Activated T-helper 2 cell treated with anti-CD3 and anti-CD28 coated beads, Interferon-gamma antibody, Interleukin-2, Interleukin-4, amounts not matched to agents 10 μg/mL and 5 μg/mL and 100 μg/mL, durations not matched to agents 14 hours and 24 hours and 36 hours (primary cell): ENCODE measurements at regions of chr6 and their contacts with region 1.

Region 1: DNA sequence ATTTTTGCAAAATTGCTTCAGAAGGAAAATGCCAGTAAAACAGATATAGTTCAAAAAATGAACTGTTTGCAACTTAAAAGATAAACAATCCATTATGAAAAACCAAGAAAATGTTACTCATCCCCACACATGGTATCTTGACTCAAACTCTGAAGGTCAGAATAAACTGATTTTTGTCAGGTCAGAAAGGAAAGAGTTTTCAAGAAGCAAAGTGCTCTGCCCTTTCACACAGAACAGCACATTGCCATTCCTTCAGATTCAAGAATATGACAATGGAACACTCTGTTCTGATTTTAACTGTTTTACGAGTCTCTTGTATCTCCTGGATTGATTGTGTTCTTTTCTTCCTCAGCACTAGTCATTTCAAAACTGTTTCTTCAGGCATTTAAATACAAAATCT is 33.8 kb upstream of the NT5E start:
- DNase-seq: no peak
- H3K4me3 Mint-ChIP-seq: no peak overlapping the region
- H3K27ac Mint-ChIP-seq: peak overlapping the region; percentile 21
- H3K4me1 Mint-ChIP-seq: peaks cover 36% of the 10 kb centered on the region
- H3K27me3 Mint-ChIP-seq: peaks cover 5% of the 10 kb centered on the region

Region 2: GRCh38 chr6:85360794-85361642 is 55.0 kb before region 1 on chr6:
- intact Hi-C with region 1: loop called (anchors 1 kb)
- DNase-seq: no peak
- H3K4me3 Mint-ChIP-seq: no peak overlapping the region
- H3K27ac Mint-ChIP-seq: peak overlapping the region; percentile 34
- H3K4me1 Mint-ChIP-seq: peaks cover 13% of the 10 kb centered on the region
- H3K27me3 Mint-ChIP-seq: no peaks in the 10 kb centered on the region

Region 3: DNA sequence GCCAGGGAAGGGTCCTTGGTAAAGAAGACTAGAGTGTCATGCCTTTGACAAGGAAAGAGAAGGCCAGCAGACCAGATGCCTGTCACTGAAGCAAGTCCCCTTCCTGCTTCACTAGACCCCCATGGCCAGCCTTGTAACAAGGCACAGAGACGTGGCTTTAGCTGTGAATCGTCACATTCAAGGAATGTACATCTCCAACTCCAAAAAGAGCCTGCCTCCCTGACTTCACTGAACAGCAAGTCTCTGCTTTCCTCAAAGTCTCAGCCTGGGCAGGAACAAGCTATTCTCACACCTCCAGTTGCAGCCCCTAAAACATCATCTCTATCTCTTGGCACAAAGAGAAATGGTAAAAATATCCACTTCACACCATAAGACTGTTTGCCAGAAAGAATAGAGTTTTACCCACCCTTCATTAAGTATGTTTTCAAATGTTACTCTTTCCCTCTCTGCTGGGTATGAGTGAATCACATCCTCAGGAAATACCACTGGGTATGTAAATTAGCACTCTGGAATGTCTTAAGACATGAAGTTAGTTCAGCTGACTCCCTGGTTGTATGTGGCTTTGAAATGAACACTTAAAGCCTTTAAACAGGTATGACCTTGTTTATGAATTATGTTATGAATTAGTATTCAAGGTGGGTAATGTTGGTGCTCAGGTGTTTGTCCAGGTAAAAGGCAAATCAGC is 12.6 kb before region 1 on chr6:
- intact Hi-C with region 1: loop called (anchors 2 kb)
- DNase-seq: no peak
- H3K4me3 Mint-ChIP-seq: no peak overlapping the region
- H3K27ac Mint-ChIP-seq: no peak overlapping the region
- H3K4me1 Mint-ChIP-seq: peaks cover 58% of the 10 kb centered on the region
- H3K27me3 Mint-ChIP-seq: no peaks in the 10 kb centered on the region

Region 4: GRCh38 chr6:85449818-85450759 is 34.0 kb after region 1 on chr6 and contains the start of gene NT5E:
- intact Hi-C with region 1: loop called (anchors 1 kb)
- DNase-seq: peak; percentile 47
- H3K4me3 Mint-ChIP-seq: peak within 1 kb of the TSS; percentile 96
- H3K27ac Mint-ChIP-seq: peak within 1 kb of the TSS; percentile 88
- H3K4me1 Mint-ChIP-seq: peaks cover 63% of the 10 kb centered on the region
- H3K27me3 Mint-ChIP-seq: peaks cover 18% of the 10 kb centered on the region
- total RNA-seq, gene NT5E: 15.4 and 16.4 TPM in 2 replicates